ENCODE measurements at regions of chr22 and their contacts with region 1.

Region 1: DNA sequence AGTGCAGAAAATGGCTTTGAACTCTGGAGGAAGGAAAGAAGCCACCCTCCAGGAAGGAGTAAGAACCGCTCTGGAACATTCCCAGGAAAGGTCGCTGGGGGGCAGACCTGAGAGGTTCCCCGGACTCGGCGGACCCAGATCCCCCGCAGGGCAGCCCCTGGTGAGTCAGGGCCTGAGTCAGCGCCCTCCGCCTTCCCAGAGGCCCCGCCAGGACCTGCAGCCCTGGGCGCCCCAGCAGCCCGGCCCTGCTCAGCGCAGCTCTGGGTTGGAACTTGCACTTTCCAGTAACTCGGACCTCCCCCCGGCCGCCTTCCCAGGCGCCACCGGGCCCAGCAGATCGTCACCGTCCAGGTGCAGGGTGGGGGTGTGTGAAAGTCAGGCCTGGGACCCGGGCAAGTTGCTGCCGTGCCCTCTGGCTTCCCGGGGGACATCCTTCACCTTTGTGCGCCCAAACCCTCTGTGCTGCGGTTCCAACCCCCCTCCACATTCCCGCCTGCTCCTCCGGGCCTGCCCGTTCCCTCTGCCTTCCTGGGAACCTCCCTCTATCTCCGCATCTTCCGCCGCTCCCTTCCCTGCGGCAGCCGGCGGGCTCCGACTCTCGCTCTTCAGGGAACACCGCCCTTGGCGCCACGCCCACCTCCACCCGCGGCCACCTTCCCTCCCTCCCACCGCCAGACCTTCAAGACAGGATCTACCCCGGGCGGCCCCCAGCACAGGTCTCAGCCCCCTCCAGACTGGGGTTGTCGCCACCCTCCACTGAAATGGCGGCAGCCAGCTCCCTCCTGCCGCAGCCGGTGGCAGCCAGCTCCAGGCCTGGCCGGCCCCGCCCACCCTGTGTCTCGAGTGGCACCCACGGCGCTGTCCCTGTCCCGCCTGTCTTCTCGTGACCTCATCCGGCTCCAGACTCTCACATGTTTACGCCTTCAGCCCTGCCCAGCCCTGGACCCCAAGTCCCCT is 36.8 kb upstream of the WNT7B start:
- DNase-seq: peak; percentile 90
- CTCF ChIP-seq: peak; percentile 58

Region 2: DNA sequence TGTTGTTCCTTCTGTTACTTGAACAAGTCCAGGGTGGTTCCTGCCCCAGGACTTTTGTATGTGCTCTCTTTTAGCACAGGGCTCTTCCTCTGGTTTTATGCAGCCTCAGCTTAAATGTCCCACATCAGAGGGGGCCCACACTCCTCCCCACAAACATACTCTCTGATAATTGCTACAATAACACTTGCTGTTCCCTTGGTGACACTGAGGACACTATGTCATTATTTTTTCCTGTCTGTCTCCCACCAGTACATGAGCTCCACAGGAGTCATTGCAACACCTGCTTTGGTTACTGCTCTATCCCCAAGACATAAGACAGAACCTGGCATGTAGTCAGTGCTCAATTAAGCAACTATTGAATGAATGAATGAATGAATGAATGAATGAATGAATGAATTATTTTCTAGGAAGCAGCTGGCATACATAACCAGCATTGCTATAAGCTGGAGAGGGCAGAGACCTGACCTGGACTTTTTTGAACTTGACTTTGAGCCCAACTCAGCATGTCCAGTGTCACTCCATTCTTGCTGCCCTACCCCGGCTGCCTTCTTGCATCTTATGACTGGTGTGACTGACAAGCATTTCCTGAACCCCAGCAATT is 29.3 kb before region 1 on chr22:
- CTCF ChIA-PET with region 1: no interaction called
- POLR2A ChIA-PET with region 1: no interaction called
- DNase-seq: no peak
- CTCF ChIP-seq: no peak

Region 3: DNA sequence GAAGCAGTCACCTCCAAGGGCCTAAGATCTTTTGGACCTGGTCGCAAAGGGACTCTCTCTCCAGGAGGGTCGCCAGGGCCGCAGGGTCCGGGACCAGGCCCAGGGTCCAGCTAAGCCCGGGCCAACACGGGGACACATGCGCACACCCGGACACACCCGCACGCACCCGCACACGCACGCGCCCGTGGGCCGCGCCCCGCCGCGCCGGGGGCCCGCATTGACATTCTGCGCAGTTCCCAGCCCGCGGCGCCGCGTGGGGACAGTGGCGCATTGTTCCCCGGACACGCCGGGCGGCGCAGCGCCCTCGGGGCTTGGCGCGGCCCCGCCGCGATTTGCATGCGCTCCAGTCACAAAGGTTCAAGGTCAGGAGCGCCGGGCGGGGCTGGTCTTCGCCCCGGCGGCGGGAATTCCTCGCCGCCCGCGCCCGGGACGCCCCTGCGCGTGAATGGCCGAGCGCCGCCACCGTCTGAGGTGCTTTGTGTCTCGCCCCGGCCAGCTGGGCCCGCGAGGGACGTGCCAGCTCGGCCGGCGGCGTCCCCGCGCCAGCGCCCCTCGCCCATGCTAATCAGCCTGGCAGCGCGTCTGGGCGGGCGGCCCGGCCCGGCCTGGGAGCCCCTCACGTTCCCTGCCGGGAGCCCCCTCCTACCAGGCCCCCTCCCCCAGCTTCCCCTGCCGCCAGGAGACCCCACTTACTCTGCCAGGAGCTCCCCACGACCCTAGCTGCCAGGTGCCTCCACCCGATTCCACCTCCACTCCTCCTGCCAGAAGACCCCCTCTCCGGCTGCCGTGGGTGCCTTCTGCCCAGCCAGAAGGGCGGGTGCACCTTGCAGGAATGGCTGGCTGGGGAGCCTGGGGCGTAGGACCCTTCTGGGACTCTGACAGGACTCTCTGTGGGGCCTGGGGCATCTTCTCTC is 13.7 kb after region 1 on chr22:
- CTCF ChIA-PET with region 1: interaction called, 87 read pairs
- POLR2A ChIA-PET with region 1: no interaction called
- DNase-seq: no peak
- CTCF ChIP-seq: no peak

Measured in GM10248 (cell line).